PC-9 (cell line): ENCODE measurements at regions of chr3 and their contacts with region 1.

Region 1: DNA sequence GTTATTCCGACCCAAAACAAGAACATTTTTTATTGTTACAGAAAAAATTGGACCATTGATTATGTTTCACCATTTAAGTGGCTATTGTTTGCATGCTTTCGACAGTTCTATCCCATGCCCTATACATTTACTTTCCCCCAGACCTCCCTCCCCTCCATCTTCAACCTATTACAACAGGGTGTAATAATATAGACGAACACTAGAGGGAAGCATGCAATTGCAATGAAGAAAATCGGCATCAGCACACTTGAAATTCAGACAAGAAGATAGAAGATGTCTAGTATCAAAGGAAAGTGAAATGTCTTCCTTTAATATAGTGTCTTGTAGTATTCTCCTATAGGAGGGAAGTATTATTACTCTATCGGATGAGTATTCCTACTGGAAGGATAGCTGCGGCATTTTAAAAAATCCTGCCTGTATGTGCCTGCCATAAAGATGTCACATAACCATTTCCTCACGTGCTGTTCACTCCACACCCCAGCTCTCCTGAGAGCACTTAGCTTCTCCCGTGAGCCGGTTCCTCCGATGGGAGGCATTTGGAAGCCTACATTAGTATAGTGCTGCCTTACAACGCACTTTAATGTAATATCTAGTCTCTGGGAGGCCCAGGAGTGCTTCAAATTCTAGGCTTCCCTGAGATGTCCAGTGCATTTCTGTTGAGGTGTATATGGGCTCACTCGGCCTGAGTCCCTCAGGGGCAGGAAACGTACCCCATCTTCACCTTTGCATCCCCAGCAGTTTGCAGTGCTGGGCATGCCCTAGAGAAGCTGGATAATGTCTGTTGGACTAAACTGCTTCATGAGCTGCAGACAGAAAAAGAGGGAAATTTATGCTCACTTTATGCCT is 17.8 kb upstream of the ERICH6 start:
- DNase-seq: peak in 1 of 2 experiments; percentile 48
- H3K4me3 ChIP-seq: no peak overlapping the region
- H3K27ac ChIP-seq: no peak overlapping the region
- H3K4me1 ChIP-seq: 0 out of 2 replicates have a peak, but pooled peaks cover 5% of the 10 kb centered on the region
- H3K27me3 ChIP-seq: no peaks in the 10 kb centered on the region
- CTCF ChIP-seq: peak; percentile 93

Region 2: GRCh38 chr3:150210461-150211110 is 510.9 kb before region 1 on chr3:
- CTCF ChIA-PET with region 1: no interaction called
- POLR2A ChIA-PET with region 1: interaction called, 22 read pairs
- intact Hi-C with region 1: no loop called
- DNase-seq: no peak
- H3K4me3 ChIP-seq: no peak overlapping the region
- H3K27ac ChIP-seq: no peak overlapping the region
- H3K4me1 ChIP-seq: no peaks in the 10 kb centered on the region; the same call in 1 of the 2 replicates
- H3K27me3 ChIP-seq: no peaks in the 10 kb centered on the region
- CTCF ChIP-seq: no peak

Region 3: DNA sequence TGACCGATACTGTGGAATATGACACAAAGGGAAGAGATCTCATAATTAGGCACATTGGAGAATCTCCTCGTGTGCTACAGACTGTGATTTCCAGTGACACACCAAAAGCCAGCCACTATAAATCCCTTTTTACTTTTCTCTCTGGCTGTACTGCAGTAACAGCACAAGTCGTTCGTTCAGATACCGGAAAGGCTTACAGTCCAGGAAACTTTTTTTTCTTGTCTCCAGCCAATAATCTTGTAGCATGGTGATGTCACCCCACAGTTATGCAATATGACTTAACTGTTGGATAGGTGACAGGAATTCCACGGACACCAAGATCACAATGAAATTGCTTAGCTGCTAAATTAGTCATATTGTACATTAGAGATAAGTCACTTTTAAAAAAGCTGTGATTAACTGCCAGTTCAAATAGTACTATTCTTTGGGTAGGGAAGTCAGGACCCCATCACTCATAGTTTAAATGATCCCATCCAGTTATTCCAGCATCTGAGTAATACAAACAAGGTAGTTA is 349.7 kb before region 1 on chr3:
- CTCF ChIA-PET with region 1: no interaction called
- POLR2A ChIA-PET with region 1: no interaction called
- intact Hi-C with region 1: no loop called
- DNase-seq: peak; percentile 77 to 99
- H3K4me3 ChIP-seq: peak overlapping the region; percentile 53; the same call in 1 of the 2 replicates
- H3K27ac ChIP-seq: peak overlapping the region; percentile 92
- H3K4me1 ChIP-seq: peaks cover 63% of the 10 kb centered on the region
- H3K27me3 ChIP-seq: no peaks in the 10 kb centered on the region
- CTCF ChIP-seq: no peak

Region 4: GRCh38 chr3:150623945-150624344 is 97.6 kb before region 1 on chr3:
- CTCF ChIA-PET with region 1: no interaction called
- POLR2A ChIA-PET with region 1: no interaction called
- intact Hi-C with region 1: no loop called
- DNase-seq: no peak
- H3K4me3 ChIP-seq: no peak overlapping the region
- H3K27ac ChIP-seq: no peak overlapping the region
- H3K4me1 ChIP-seq: no peaks in the 10 kb centered on the region
- H3K27me3 ChIP-seq: no peaks in the 10 kb centered on the region
- CTCF ChIP-seq: no peak

Region 5: DNA sequence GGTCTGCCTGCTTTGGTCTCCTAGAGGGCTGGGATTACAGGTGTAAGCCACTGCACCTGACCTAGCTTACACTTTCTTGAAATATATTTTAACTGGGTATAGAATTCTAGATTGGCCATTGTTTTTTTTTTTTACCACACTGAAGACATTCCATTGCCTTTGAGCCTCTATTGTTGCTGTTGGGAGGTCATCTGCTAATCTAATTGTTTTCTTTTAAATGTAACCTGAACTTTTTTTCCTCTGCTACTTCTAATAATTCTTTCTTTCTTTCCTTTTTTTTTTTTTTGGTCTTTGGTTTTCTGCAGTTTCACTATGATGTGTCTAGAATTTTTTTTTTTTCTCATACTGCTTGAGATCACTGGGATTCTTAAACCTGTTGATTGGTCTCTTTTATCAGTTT is 45.9 kb before region 1 on chr3:
- CTCF ChIA-PET with region 1: no interaction called
- POLR2A ChIA-PET with region 1: no interaction called
- intact Hi-C with region 1: no loop called
- DNase-seq: no peak
- H3K4me3 ChIP-seq: no peak overlapping the region; the same call in 1 of the 2 replicates
- H3K27ac ChIP-seq: no peak overlapping the region
- H3K4me1 ChIP-seq: no peaks in the 10 kb centered on the region
- H3K27me3 ChIP-seq: no peaks in the 10 kb centered on the region
- CTCF ChIP-seq: no peak

Region 6: GRCh38 chr3:150787741-150788370 is 66.3 kb after region 1 on chr3:
- CTCF ChIA-PET with region 1: no interaction called
- POLR2A ChIA-PET with region 1: no interaction called
- intact Hi-C with region 1: loop called (anchors 2 kb)
- DNase-seq: peak in 1 of 2 experiments; percentile 55
- H3K4me3 ChIP-seq: no peak overlapping the region
- H3K27ac ChIP-seq: no peak overlapping the region
- H3K4me1 ChIP-seq: peaks cover 18% of the 10 kb centered on the region
- H3K27me3 ChIP-seq: no peaks in the 10 kb centered on the region
- CTCF ChIP-seq: peak; percentile 51

Region 7: GRCh38 chr3:150870396-150870795 is 148.9 kb after region 1 on chr3:
- CTCF ChIA-PET with region 1: no interaction called
- POLR2A ChIA-PET with region 1: no interaction called
- intact Hi-C with region 1: loop called (anchors 1 kb)
- DNase-seq: no peak
- H3K4me3 ChIP-seq: no peak overlapping the region
- H3K27ac ChIP-seq: no peak overlapping the region
- H3K4me1 ChIP-seq: peaks cover 5% of the 10 kb centered on the region; the same call in 1 of the 2 replicates
- H3K27me3 ChIP-seq: no peaks in the 10 kb centered on the region
- CTCF ChIP-seq: no peak

Region 8: DNA sequence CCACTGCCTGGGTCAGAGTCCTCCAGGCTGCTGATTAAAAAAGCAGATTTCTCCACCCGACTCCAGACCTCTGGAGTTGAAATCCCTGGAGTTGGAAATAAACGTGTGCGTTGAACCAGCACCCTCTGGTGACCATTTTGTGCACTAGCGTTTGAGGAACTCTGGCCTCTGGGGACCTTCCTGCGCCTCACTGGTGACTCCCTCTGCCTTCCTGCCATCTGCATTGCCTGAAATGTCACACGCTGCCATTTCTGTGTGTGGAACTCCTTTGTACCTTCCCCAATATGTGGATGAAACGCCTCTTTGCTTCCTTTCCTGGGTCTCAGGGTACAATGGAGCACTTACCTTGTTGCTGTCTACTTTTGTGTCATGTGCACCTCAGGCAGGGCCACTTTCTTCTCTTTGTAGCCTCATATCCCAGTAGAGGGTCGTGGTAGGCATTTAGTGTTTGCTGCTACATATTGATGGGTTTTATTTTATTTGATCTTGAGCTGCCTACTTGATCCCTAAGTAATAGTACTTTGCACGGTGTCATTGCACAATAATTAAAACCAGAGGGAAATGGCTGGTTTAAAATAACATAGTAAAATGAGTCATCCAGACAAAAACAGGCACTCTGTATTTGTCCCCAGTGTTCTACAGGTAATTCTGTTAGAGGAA is 424.7 kb after region 1 on chr3:
- CTCF ChIA-PET with region 1: no interaction called
- POLR2A ChIA-PET with region 1: no interaction called
- intact Hi-C with region 1: loop called (anchors 1 kb)
- DNase-seq: peak; percentile 73 to 79
- H3K4me3 ChIP-seq: peak overlapping the region; percentile 41; the same call in 1 of the 2 replicates
- H3K27ac ChIP-seq: peak overlapping the region; percentile 45
- H3K4me1 ChIP-seq: peaks cover 15% of the 10 kb centered on the region
- H3K27me3 ChIP-seq: no peaks in the 10 kb centered on the region
- CTCF ChIP-seq: peak; percentile 96